ENCODE measurements at regions of chr15 and their contacts with region 1.

Region 1: GRCh38 chr15:77543159-77543882 is 89.4 kb downstream of the LINGO1 start:
- DNase-seq: peak; percentile 89 to 95 (median 94)
- ATAC-seq: peak; percentile 96
- H3K4me3 ChIP-seq: peak overlapping the region; percentile 42
- H3K27ac ChIP-seq: no peak overlapping the region
- H3K4me1 ChIP-seq: peaks cover 0 to 24% of the 10 kb centered on the region in 2 experiments; a peak in 4 of 5 replicates
- H3K27me3 ChIP-seq: no peaks in the 10 kb centered on the region
- CTCF ChIP-seq: peak; percentile 97 to 99 (median 97)
- EP300 ChIP-seq: no peak
- POLR2A ChIP-seq: peak; percentile 56; the same call in 1 of the 2 replicates
- RAD21 ChIP-seq: peak; percentile 95 to 96

Region 2: GRCh38 chr15:77107531-77108355 is 435.6 kb before region 1 on chr15:
- CTCF ChIA-PET with region 1: interaction called, 16 read pairs
- POLR2A ChIA-PET with region 1: interaction called, 4 read pairs
- in situ Hi-C with region 1: no loop called
- intact Hi-C with region 1: no loop called
- DNase-seq: peak; percentile 37 to 52 (median 47)
- ATAC-seq: peak; percentile 91
- H3K4me3 ChIP-seq: no peak overlapping the region
- H3K27ac ChIP-seq: no peak overlapping the region
- H3K4me1 ChIP-seq: no peaks in the 10 kb centered on the region
- H3K27me3 ChIP-seq: no peaks in the 10 kb centered on the region
- CTCF ChIP-seq: peak; percentile 67 to 74 (median 70)
- EP300 ChIP-seq: no peak
- POLR2A ChIP-seq: no peak
- RAD21 ChIP-seq: peak; percentile 50 to 82; a peak in 3 of 4 replicates

Region 3: GRCh38 chr15:77118882-77119321 is 424.4 kb before region 1 on chr15:
- CTCF ChIA-PET with region 1: interaction called, 29 read pairs
- POLR2A ChIA-PET with region 1: interaction called, 3 read pairs
- in situ Hi-C with region 1: no loop called
- intact Hi-C with region 1: loop called (anchors 2 kb)
- DNase-seq: peak in 2 of 4 experiments; percentile 37 to 55
- ATAC-seq: peak; percentile 69
- H3K4me3 ChIP-seq: no peak overlapping the region
- H3K27ac ChIP-seq: no peak overlapping the region
- H3K4me1 ChIP-seq: no peaks in the 10 kb centered on the region
- H3K27me3 ChIP-seq: no peaks in the 10 kb centered on the region
- CTCF ChIP-seq: peak; percentile 34 to 76 (median 57); a peak in 5 of 6 replicates
- EP300 ChIP-seq: no peak
- POLR2A ChIP-seq: no peak
- RAD21 ChIP-seq: peak; percentile 37 to 72; a peak in 3 of 4 replicates

Region 4: GRCh38 chr15:77186594-77187011 is 356.7 kb before region 1 on chr15:
- CTCF ChIA-PET with region 1: interaction called, 36 read pairs
- POLR2A ChIA-PET with region 1: no interaction called
- in situ Hi-C with region 1: no loop called
- intact Hi-C with region 1: loop called (anchors 2 kb)
- DNase-seq: peak in 3 of 4 experiments; percentile 13 to 45 (median 27)
- ATAC-seq: peak; percentile 50; the same call in 1 of the 3 replicates
- H3K4me3 ChIP-seq: no peak overlapping the region
- H3K27ac ChIP-seq: no peak overlapping the region
- H3K4me1 ChIP-seq: peaks cover 0 to 25% of the 10 kb centered on the region in 2 experiments; a peak in 3 of 5 replicates
- H3K27me3 ChIP-seq: no peaks in the 10 kb centered on the region
- CTCF ChIP-seq: peak; percentile 55 to 74 (median 59); a peak in 5 of 6 replicates
- EP300 ChIP-seq: no peak
- POLR2A ChIP-seq: no peak
- RAD21 ChIP-seq: peak; percentile 82 to 86

Region 5: DNA sequence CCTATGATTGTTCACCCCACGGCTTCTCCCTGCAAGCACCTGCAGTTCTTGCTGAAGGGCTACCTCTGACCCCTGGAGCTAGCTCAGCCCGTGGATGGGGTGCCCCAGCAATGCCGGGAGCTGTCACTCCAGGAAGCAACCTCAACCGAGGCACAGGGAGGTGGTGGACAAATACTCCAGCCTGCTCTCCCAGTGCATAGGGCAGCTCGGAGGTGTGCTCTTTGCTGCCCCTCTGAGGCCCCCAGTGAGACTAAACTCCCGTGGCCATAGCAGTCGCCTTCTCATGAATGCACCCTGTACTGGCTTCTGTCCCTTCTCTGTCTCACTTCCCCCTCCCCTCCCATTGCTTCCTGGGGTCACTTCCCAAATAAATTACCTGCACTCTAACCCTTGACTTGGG is 40.9 kb after region 1 on chr15:
- CTCF ChIA-PET with region 1: no interaction called
- POLR2A ChIA-PET with region 1: no interaction called
- in situ Hi-C with region 1: no loop called
- intact Hi-C with region 1: loop called (anchors 1 kb)
- DNase-seq: peak; percentile 51 to 59 (median 53)
- ATAC-seq: peak; percentile 97
- H3K4me3 ChIP-seq: no peak overlapping the region
- H3K27ac ChIP-seq: no peak overlapping the region
- H3K4me1 ChIP-seq: no peaks in the 10 kb centered on the region
- H3K27me3 ChIP-seq: peaks cover 53 to 72% of the 10 kb centered on the region in 2 experiments
- CTCF ChIP-seq: peak; percentile 58 to 63 (median 60)
- EP300 ChIP-seq: no peak
- POLR2A ChIP-seq: no peak
- RAD21 ChIP-seq: peak in 1 of 2 experiments; percentile 60; a peak in 2 of 4 replicates

Region 6: GRCh38 chr15:77633134-77633912 is 90.0 kb after region 1 on chr15:
- CTCF ChIA-PET with region 1: no interaction called
- POLR2A ChIA-PET with region 1: no interaction called
- in situ Hi-C with region 1: no loop called
- intact Hi-C with region 1: no loop called
- DNase-seq: peak; percentile 86 to 92 (median 90)
- ATAC-seq: peak; percentile 95
- H3K4me3 ChIP-seq: peak overlapping the region; percentile 43
- H3K27ac ChIP-seq: peak overlapping the region; percentile 75
- H3K4me1 ChIP-seq: peaks cover 25 to 55% of the 10 kb centered on the region in 2 experiments; a peak in 4 of 5 replicates
- H3K27me3 ChIP-seq: peaks cover 11 to 28% of the 10 kb centered on the region in 2 experiments; a peak in 4 of 5 replicates
- CTCF ChIP-seq: peak; percentile 100
- EP300 ChIP-seq: no peak
- POLR2A ChIP-seq: peak; percentile 74
- RAD21 ChIP-seq: peak; percentile 80 to 95

Region 7: GRCh38 chr15:77810130-77810571 is 266.8 kb after region 1 on chr15:
- CTCF ChIA-PET with region 1: no interaction called
- POLR2A ChIA-PET with region 1: no interaction called
- in situ Hi-C with region 1: no loop called
- intact Hi-C with region 1: no loop called
- DNase-seq: no peak
- ATAC-seq: peak; percentile 20; the same call in 1 of the 3 replicates
- H3K4me3 ChIP-seq: no peak overlapping the region
- H3K27ac ChIP-seq: no peak overlapping the region
- H3K4me1 ChIP-seq: peaks cover 0 to 4% of the 10 kb centered on the region in 2 experiments; a peak in 1 of 5 replicates
- H3K27me3 ChIP-seq: peaks cover 0 to 16% of the 10 kb centered on the region in 2 experiments; a peak in 2 of 5 replicates
- CTCF ChIP-seq: no peak
- EP300 ChIP-seq: no peak
- POLR2A ChIP-seq: no peak
- RAD21 ChIP-seq: no peak

Region 8: DNA sequence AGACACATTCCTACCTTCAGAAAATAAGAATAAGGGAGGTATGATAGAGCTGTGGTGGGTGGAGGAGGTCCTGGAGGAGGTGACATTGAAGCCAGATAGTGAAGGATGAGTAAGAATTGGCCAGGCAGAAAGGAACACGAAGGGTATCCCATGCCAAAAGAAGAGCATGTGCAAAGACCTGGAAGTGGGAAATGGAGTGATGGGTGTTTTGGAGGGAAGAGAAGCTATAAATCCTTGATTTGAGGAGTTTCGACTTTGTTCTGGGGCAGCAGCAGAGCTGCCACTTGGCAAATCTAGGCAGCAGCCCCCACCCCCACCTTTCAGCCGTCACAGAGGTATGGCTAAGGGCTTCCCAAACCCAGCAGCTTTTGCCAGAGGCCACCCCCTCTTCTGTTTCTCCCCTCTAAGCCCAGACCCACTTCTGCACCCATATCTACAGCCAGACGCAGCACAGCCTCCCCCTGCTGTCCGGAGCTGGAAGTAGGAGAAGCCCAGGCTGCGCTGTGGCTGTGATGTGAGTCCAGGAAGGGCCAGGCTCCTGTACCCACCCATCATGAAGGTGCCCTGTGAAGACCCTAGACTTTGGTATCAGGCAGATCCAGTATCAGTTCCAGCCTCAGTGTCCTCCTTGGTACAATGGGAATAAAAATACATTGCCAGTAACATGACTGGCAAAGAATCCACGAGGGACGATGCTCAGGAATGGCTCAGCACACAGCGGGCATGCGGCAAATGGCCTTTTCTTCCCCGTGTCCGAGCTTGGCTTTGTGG is 278.1 kb after region 1 on chr15:
- CTCF ChIA-PET with region 1: no interaction called
- POLR2A ChIA-PET with region 1: no interaction called
- in situ Hi-C with region 1: no loop called
- intact Hi-C with region 1: loop called (anchors 1 kb)
- DNase-seq: peak; percentile 75 to 78 (median 76)
- ATAC-seq: peak; percentile 92
- H3K4me3 ChIP-seq: no peak overlapping the region
- H3K27ac ChIP-seq: no peak overlapping the region
- H3K4me1 ChIP-seq: peaks cover 0 to 26% of the 10 kb centered on the region in 2 experiments; a peak in 2 of 5 replicates
- H3K27me3 ChIP-seq: peaks cover 9 to 70% of the 10 kb centered on the region in 2 experiments; a peak in 4 of 5 replicates
- CTCF ChIP-seq: peak; percentile 87 to 92 (median 91)
- EP300 ChIP-seq: no peak
- POLR2A ChIP-seq: no peak
- RAD21 ChIP-seq: peak; percentile 58 to 89